HEK293 (cell line): ENCODE measurements at regions of chr9 and their contacts with region 1.

Region 1: DNA sequence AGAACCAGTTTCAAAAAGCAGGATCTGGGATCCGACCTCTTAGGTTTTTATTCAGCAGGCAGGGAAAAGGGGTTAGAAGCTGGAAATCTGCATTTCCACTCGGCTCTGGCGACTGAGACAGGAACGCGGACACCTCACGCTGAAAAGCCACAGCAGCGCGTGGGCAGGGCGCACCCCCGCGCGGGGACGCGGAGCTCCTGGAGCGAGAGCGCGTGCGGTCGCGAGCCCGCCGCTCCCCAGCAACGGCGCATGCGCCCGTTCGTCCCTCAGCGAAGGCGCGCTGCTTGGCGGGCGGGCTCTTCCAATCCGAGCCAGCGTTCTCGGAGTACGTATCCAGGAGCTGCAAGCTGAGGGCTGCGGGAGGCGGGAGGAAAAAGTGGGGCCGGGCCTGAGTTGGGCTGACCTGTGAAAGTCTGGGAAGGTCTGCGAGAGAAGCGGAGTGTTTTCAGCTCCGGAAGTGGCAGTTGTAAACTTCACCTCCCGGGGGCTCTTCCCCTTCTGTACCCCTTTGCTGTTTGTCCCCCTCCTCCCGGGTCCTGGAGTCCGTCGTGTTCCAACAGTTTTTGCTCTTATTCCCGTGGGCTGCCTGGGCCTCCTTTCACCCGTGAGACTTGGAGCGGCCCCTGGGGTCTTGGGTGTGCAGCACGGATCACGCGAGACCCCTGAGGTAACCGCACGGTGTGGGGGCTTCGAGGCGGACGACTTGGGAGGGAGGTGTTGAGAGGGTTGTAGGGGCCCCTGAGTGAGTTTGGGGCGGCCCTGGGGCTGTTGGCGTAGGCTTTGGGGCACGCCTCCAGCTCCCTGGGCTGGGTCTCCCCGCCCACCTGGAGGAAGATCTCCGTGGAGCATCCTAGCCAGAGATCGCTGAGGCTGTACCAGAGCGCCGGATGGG is at the start of gene CCDC171:
- H3K4me3 ChIP-seq: peak within 1 kb of the TSS; percentile 78
- H3K27ac ChIP-seq: peak within 1 kb of the TSS; percentile 75
- H3K4me1 ChIP-seq: no peaks in the 10 kb centered on the region
- CTCF ChIP-seq: peak; percentile 32

Region 2: GRCh38 chr9:15510789-15511575 is 41.9 kb before region 1 on chr9 and contains the start of gene PSIP1:
- CTCF ChIA-PET with region 1: interaction called, 4 read pairs
- POLR2A ChIA-PET with region 1: interaction called, 61 read pairs
- H3K4me3 ChIP-seq: peak within 1 kb of the TSS; percentile 99
- H3K27ac ChIP-seq: peak within 1 kb of the TSS; percentile 99
- H3K4me1 ChIP-seq: peaks cover 6% of the 10 kb centered on the region; the same call in 1 of the 2 replicates
- CTCF ChIP-seq: 0 out of 2 replicates have a peak, but pooled peaks have one; percentile 15

Region 3: DNA sequence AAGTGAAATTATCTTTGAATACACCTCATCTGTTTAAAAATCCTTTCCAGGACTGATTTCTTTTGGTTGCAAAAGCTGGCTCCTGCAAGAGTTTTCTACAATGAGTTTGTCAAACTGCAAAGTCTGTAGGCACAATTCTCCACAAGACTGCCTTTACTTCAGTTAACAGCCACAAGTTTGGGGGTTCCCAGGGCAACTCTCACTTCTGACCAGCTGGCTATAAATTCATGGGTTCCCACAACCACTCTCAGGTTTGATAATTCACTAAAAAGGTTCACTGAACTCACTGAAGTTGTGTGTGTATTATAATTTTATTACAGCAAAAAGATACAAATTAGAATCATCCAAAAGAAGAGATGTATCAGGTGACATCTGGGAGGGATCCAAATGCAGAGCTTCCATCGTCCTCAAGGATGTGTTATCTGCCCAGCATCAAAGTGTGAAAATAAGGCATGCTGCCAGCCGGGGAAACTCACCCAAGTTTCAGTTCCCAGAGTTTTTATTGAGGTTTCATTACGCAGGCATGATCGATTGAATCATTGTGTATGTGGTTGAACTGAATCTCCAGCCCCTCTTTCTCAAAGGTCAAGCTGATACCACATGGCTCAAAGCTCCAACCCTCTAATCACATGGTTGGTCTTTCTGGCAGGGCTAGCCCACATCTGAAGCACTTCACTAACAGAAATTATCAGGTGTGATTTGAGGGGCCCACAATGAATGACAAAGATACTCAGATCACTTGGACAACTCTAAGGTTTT is 23.1 kb before region 1 on chr9:
- CTCF ChIA-PET with region 1: no interaction called
- POLR2A ChIA-PET with region 1: interaction called, 10 read pairs
- H3K4me3 ChIP-seq: no peak overlapping the region
- H3K27ac ChIP-seq: no peak overlapping the region
- H3K4me1 ChIP-seq: no peaks in the 10 kb centered on the region
- CTCF ChIP-seq: no peak

Region 4: GRCh38 chr9:15578714-15579113 is 25.8 kb after region 1 on chr9:
- CTCF ChIA-PET with region 1: no interaction called
- POLR2A ChIA-PET with region 1: no interaction called
- H3K4me3 ChIP-seq: no peak overlapping the region
- H3K27ac ChIP-seq: no peak overlapping the region
- H3K4me1 ChIP-seq: no peaks in the 10 kb centered on the region
- CTCF ChIP-seq: no peak